ENCODE measurements at regions of chr5 and their contacts with region 1.

Region 1: GRCh38 chr5:101942321-101943215 is 353.5 kb downstream of the SLCO4C1 start:
- DNase-seq: peak; percentile 14
- CTCF ChIP-seq: peak; percentile 62

Region 2: GRCh38 chr5:101929628-101930027 is 12.9 kb before region 1 on chr5:
- CTCF ChIA-PET with region 1: interaction called, 14 read pairs
- POLR2A ChIA-PET with region 1: no interaction called
- DNase-seq: no peak
- CTCF ChIP-seq: no peak

Region 3: DNA sequence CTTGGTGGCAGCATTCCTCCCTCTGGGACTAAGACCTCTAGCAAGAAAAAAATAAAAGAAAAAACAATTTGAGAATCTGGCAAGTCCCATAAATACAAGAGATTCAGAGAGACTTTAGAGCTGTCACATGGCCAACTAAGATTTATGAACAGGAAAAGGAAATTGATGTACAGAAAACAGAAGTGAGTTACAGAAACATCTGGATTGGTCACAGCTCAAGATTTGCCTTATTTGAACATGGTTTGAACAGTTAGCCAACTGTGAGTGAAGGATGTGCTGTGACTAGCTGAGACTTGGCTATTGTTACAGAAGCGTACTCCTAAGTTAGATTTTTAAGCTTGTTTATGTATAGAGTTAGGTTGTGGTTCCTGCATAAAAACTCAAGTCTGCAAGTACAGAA is 13.3 kb after region 1 on chr5:
- CTCF ChIA-PET with region 1: interaction called, 11 read pairs
- POLR2A ChIA-PET with region 1: no interaction called
- DNase-seq: no peak
- CTCF ChIP-seq: no peak

Region 4: DNA sequence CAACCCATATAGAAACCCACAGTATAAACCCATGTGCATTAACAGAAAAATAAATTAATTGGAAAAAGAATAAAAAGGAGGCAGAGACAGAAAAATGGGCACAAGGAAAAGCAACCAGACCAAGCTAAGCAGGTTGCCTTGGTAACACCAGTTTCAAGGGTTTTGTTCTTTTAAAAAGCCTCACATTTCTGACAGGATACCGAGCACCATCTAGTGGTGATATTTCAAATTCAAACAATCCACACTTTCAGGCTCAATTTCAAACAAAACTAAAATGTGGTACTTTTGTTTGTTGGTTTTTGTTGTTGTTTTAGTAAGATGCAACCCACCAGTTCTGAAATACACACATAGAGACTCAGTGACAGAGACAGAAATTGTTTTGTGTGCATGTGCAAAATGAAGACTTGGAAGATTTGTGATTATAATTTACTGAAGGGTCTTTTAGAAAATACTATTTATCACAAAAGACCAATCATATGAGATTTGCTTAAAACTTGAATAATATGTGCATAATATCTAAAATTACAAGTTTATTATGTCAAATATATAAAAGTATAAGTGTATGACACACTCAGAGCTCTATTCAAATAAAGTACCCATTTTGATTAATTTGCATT is 35.3 kb after region 1 on chr5:
- CTCF ChIA-PET with region 1: interaction called, 22 read pairs
- POLR2A ChIA-PET with region 1: no interaction called
- DNase-seq: peak; percentile 48
- CTCF ChIP-seq: peak; percentile 60

Region 5: GRCh38 chr5:101997235-101997634 is 54.7 kb after region 1 on chr5:
- CTCF ChIA-PET with region 1: no interaction called
- POLR2A ChIA-PET with region 1: no interaction called
- DNase-seq: no peak
- CTCF ChIP-seq: no peak

Region 6: DNA sequence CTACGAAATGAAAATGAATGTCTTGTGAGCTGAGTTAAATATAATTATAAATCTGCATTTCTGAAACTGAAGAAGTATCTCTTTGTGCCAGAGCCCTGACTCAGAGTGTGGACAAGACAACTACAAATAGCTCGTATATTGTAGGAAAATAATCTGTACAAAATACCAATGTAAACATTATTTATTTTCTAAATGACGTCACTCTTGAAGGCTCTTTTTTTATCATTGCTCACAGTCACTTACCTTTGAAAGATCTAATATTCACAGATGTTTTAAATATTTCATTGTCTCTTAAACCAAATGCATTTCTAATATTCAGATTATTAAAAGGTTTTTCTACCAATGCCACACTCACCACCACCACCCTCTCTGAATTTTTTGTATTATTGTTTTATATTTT is 127.4 kb after region 1 on chr5:
- CTCF ChIA-PET with region 1: no interaction called
- POLR2A ChIA-PET with region 1: no interaction called
- DNase-seq: no peak
- CTCF ChIP-seq: no peak

Region 7: DNA sequence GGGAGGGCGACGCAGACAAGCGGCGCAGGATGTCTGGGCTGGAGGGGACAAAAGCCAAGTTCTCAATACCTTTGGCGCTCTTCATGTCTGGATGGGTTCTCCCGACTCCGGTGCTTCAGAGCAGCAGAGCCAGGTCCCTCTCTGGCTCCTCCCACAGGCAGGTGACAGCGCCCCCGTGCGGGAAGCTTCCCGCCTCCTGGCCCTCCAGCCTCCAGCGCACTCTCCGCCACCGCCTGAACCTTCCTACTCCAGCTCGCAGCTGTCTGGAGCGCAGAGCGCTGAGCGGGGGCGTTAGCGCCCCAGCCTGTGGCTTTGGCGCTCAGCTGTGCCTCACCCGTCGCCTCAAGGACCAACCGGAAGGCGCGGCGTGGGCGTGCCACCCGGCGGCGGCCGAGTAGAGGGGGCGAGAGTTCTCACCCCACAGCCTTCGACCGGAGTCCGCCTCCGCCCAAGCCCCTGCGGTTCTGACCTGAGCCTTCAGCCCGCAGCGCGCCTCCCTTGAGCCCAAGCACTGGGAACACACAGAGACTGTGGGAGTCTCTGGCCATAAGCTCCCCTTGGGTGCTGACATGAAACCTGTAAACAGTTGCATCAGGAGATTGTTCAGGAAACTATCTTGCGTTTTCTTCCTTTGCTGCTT is 353.7 kb after region 1 on chr5 and contains the start of gene SLCO4C1:
- CTCF ChIA-PET with region 1: no interaction called
- POLR2A ChIA-PET with region 1: no interaction called
- DNase-seq: peak; percentile 83
- CTCF ChIP-seq: peak; percentile 70